CD8-positive, alpha-beta T cell (primary cell): ENCODE measurements at regions of chr6 and their contacts with region 1.

Region 1: DNA sequence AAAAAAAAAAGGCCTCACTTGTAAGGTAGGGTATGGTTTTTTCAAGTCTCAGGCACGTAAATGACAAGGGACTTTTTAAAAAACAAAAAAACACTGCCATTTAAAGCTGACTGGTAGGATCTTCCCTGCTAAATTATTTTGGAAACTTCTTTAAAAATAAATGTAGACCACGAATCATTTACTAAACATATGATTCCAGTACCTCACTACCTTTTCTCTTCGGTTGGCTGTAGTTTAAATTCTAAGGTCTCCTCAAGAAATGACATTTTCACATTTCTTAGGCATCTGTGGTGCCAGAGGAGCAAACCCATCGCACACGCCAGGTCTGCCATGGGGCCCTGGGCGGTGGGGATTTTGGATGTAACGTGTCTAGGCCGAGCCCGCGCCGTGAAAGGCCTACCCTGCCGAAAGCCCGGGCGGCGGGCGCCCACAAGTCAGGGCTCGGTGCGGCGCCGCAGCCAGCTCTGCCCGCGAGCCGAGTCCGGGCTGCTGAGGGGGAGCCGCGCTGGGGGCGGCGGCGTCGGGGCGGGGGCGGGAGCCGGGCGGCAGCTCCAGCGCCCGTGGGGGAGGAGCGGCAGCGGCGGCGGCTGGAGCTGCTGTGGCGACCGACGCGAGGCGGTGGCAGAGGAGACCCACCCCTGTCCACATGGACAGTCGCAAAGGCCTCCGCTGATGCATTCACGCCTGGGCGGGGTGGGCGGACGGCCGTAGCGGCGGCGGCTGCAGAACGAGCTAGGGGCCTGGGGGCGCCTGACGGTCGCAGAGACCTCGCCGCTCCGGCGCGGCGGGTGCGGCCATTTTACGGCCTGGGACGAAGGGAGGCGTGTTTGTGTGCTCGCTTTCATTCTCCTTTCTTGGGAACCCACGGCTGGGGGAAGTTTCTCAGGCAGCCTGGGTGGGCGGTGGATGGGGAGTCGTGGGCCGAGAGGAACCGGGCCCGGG is at the start of gene SENP6:
- DNase-seq: peak; percentile 50 to 89 (median 72)
- ATAC-seq: peak; percentile 69
- H3K4me3 ChIP-seq: peak within 1 kb of the TSS; percentile 74 to 90
- H3K4me3 Mint-ChIP-seq: peak within 1 kb of the TSS; percentile 98
- H3K27ac ChIP-seq: peak within 1 kb of the TSS; percentile 90
- H3K27ac Mint-ChIP-seq: peak within 1 kb of the TSS; percentile 98
- H3K4me1 ChIP-seq: peaks cover 42% of the 10 kb centered on the region
- H3K4me1 Mint-ChIP-seq: peaks cover 72% of the 10 kb centered on the region
- H3K27me3 ChIP-seq: no peaks in the 10 kb centered on the region
- H3K27me3 Mint-ChIP-seq: no peaks in the 10 kb centered on the region
- CTCF ChIP-seq: no peak
- total RNA-seq, gene SENP6: 83.6 to 94.8 TPM

Region 2: GRCh38 chr6:75243333-75244062 is 358.1 kb before region 1 on chr6 and contains the start of gene COX7A2:
- CTCF ChIA-PET with region 1: no interaction called
- POLR2A ChIA-PET with region 1: interaction called, 9 read pairs
- intact Hi-C with region 1: loop called (anchors 1 to 5 kb)
- DNase-seq: peak; percentile 71 to 94 (median 87)
- ATAC-seq: peak; percentile 94
- H3K4me3 ChIP-seq: peak within 1 kb of the TSS; percentile 94 to 98
- H3K4me3 Mint-ChIP-seq: peak within 1 kb of the TSS; percentile 99
- H3K27ac ChIP-seq: peak within 1 kb of the TSS; percentile 93 to 97
- H3K27ac Mint-ChIP-seq: peak within 1 kb of the TSS; percentile 100
- H3K4me1 ChIP-seq: peaks cover 6% of the 10 kb centered on the region
- H3K4me1 Mint-ChIP-seq: peaks cover 36% of the 10 kb centered on the region
- H3K27me3 ChIP-seq: no peaks in the 10 kb centered on the region
- H3K27me3 Mint-ChIP-seq: peaks cover 6% of the 10 kb centered on the region
- CTCF ChIP-seq: no peak
- total RNA-seq, gene COX7A2: 221 to 229 TPM

Region 3: DNA sequence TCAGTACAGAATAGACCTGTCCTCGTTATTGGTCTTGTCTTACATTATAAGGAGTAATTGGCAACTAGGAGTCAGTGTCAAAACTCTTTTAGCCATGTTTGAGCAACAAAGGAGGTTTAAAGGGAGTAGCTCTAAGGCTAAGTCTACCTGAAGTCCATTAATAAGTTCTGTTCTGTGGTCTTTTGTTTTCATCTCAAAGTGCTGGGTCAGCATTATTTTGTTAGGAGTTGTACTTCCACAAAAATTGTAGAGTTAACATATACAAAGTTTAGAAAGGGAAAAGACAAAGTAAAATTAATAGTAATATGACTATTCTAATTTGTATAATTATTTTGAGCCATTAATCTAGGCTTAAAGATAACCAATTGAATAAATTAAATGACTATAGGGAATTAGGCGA is 12.6 kb before region 1 on chr6:
- CTCF ChIA-PET with region 1: no interaction called
- POLR2A ChIA-PET with region 1: interaction called, 4 read pairs
- intact Hi-C with region 1: loop called in 1 of 2 experiments (anchors 1 kb)
- DNase-seq: no peak
- ATAC-seq: no peak
- H3K4me3 ChIP-seq: no peak overlapping the region
- H3K4me3 Mint-ChIP-seq: no peak overlapping the region
- H3K27ac ChIP-seq: no peak overlapping the region
- H3K27ac Mint-ChIP-seq: no peak overlapping the region
- H3K4me1 ChIP-seq: no peaks in the 10 kb centered on the region
- H3K4me1 Mint-ChIP-seq: no peaks in the 10 kb centered on the region
- H3K27me3 ChIP-seq: no peaks in the 10 kb centered on the region
- H3K27me3 Mint-ChIP-seq: no peaks in the 10 kb centered on the region
- CTCF ChIP-seq: no peak

Region 4: GRCh38 chr6:75620381-75621304 is 19.1 kb after region 1 on chr6:
- CTCF ChIA-PET with region 1: no interaction called
- POLR2A ChIA-PET with region 1: interaction called, 8 read pairs
- intact Hi-C with region 1: loop called in 1 of 2 experiments (anchors 2 kb)
- DNase-seq: no peak
- ATAC-seq: peak; percentile 20
- H3K4me3 ChIP-seq: no peak overlapping the region
- H3K4me3 Mint-ChIP-seq: peak overlapping the region; percentile 30
- H3K27ac ChIP-seq: peak overlapping the region in 1 of 2 experiments; percentile 6
- H3K27ac Mint-ChIP-seq: peak overlapping the region; percentile 85
- H3K4me1 ChIP-seq: peaks cover 33% of the 10 kb centered on the region
- H3K4me1 Mint-ChIP-seq: peaks cover 67% of the 10 kb centered on the region
- H3K27me3 ChIP-seq: no peaks in the 10 kb centered on the region
- H3K27me3 Mint-ChIP-seq: no peaks in the 10 kb centered on the region
- CTCF ChIP-seq: no peak

Region 5: GRCh38 chr6:76466286-76466685 is 864.7 kb after region 1 on chr6:
- CTCF ChIA-PET with region 1: no interaction called
- POLR2A ChIA-PET with region 1: no interaction called
- intact Hi-C with region 1: no loop called
- DNase-seq: no peak
- ATAC-seq: no peak
- H3K4me3 ChIP-seq: no peak overlapping the region
- H3K4me3 Mint-ChIP-seq: no peak overlapping the region
- H3K27ac ChIP-seq: no peak overlapping the region
- H3K27ac Mint-ChIP-seq: no peak overlapping the region
- H3K4me1 ChIP-seq: no peaks in the 10 kb centered on the region
- H3K4me1 Mint-ChIP-seq: no peaks in the 10 kb centered on the region
- H3K27me3 ChIP-seq: no peaks in the 10 kb centered on the region
- H3K27me3 Mint-ChIP-seq: no peaks in the 10 kb centered on the region
- CTCF ChIP-seq: no peak